GM12878 (cell line): ENCODE measurements at regions of chr17 and their contacts with region 1.

Region 1: GRCh38 chr17:62109378-62109902 is 44.4 kb upstream of the MED13 start:
- DNase-seq: peak; percentile 77
- ATAC-seq: peak; percentile 100
- H3K4me3 ChIP-seq: no peak overlapping the region
- H3K27ac ChIP-seq: no peak overlapping the region
- H3K4me1 ChIP-seq: peaks cover 2% of the 10 kb centered on the region; the same call in 1 of the 2 replicates
- H3K27me3 ChIP-seq: no peaks in the 10 kb centered on the region; a peak in 1 of 4 replicates
- CTCF ChIP-seq: peak; percentile 97 to 100 (median 100); a peak in 5 of 6 replicates
- EP300 ChIP-seq: no peak
- POLR2A ChIP-seq: no peak
- RAD21 ChIP-seq: peak; percentile 100

Region 2: GRCh38 chr17:61412143-61412859 is 697.1 kb before region 1 on chr17:
- CTCF ChIA-PET with region 1: interaction called, 4 read pairs
- POLR2A ChIA-PET with region 1: no interaction called
- RAD21 ChIA-PET with region 1: interaction called, 8 read pairs
- SMC1A ChIA-PET with region 1: interaction called, 8 read pairs
- in situ Hi-C with region 1: loop called (anchors 10 kb)
- intact Hi-C with region 1: loop called (anchors 5 kb)
- DNase-seq: peak; percentile 5
- ATAC-seq: peak; percentile 83
- H3K4me3 ChIP-seq: peak overlapping the region; percentile 54; the same call in 1 of the 2 replicates
- H3K27ac ChIP-seq: no peak overlapping the region
- H3K4me1 ChIP-seq: peaks cover 4% of the 10 kb centered on the region; the same call in 1 of the 2 replicates
- H3K27me3 ChIP-seq: peaks cover 17 to 34% of the 10 kb centered on the region in 2 experiments
- CTCF ChIP-seq: peak; percentile 83 to 94 (median 87)
- EP300 ChIP-seq: no peak
- POLR2A ChIP-seq: no peak
- RAD21 ChIP-seq: peak; percentile 89

Region 3: DNA sequence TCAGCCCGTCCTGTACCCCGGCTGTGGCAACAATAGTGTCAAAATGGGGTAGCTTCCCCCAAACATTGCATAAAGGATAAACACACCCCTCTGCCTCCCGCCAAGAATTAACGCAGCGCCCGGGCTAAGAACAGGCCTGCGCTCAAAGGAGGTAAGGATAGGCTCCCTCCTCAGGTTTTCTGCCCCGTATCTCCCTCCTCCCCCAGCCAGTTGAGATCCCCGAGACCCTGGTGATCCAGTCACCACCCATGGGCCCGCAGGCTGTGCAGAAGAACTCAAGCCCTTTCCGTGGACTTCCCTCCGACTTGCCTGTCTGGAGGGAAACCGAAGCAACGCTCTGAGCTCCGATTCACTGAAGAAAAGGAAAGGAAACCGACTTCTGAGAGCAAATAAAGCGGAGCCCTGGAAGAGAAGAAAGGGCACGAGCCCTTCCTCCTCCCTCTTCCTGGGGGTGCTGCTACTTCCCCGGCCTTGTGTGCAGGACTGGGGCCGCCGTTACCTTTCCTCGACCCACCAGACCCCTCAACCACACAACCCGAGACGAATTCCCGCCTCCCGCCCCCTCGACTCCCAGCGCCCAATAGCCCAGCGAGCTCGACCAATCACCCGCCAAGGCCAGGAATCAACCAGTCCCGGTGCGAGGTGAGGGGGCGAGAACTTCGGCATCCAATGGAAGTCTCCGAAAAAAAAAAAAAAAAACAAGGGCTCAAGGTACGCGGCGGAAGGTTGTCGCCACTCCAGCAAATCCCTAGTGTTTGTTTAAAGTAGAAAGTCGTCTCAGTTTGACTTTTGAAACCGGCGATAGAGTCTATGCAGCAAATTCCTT is 246.3 kb before region 1 on chr17 and contains the start of gene BRIP1:
- CTCF ChIA-PET with region 1: interaction called, 52 read pairs
- POLR2A ChIA-PET with region 1: no interaction called
- RAD21 ChIA-PET with region 1: interaction called, 31 read pairs
- SMC1A ChIA-PET with region 1: interaction called, 35 read pairs
- in situ Hi-C with region 1: no loop called
- intact Hi-C with region 1: loop called (anchors 5 kb)
- DNase-seq: peak; percentile 78
- ATAC-seq: peak; percentile 97
- H3K4me3 ChIP-seq: peak within 1 kb of the TSS; percentile 98
- H3K27ac ChIP-seq: peak within 1 kb of the TSS; percentile 97
- H3K4me1 ChIP-seq: peaks cover 3% of the 10 kb centered on the region; the same call in 1 of the 2 replicates
- H3K27me3 ChIP-seq: no peaks in the 10 kb centered on the region
- CTCF ChIP-seq: no peak
- EP300 ChIP-seq: no peak
- POLR2A ChIP-seq: peak; percentile 91
- RAD21 ChIP-seq: no peak
- polyA plus RNA-seq, gene BRIP1: 4.0 to 4.2 TPM

Region 4: DNA sequence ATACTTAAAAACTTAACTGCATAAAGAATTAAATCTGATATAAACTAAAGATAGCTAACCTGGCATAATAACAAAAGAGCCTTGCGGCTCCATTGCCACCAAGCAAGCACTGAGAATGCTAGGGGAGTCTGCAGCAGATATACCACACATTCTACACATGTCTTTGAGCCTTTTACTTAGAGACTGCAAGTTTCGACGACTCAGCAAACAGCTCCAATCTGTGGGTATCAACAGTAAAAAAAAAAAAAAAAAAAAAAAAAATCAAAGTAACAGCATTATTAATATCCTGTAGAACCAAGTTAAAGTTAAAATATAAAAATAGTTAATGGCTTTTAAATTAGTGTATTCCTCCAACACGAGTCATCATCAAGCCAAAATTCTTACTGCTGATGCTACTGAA is 153.8 kb before region 1 on chr17:
- CTCF ChIA-PET with region 1: interaction called, 5 read pairs
- POLR2A ChIA-PET with region 1: no interaction called
- RAD21 ChIA-PET with region 1: interaction called, 16 read pairs
- SMC1A ChIA-PET with region 1: interaction called, 18 read pairs
- in situ Hi-C with region 1: no loop called
- intact Hi-C with region 1: no loop called
- DNase-seq: no peak
- ATAC-seq: no peak
- H3K4me3 ChIP-seq: no peak overlapping the region
- H3K27ac ChIP-seq: no peak overlapping the region
- H3K4me1 ChIP-seq: no peaks in the 10 kb centered on the region
- H3K27me3 ChIP-seq: no peaks in the 10 kb centered on the region
- CTCF ChIP-seq: no peak
- EP300 ChIP-seq: no peak
- POLR2A ChIP-seq: no peak
- RAD21 ChIP-seq: no peak

Region 5: GRCh38 chr17:62024894-62025293 is 84.5 kb before region 1 on chr17:
- CTCF ChIA-PET with region 1: interaction called, 50 read pairs
- POLR2A ChIA-PET with region 1: no interaction called
- RAD21 ChIA-PET with region 1: interaction called, 22 read pairs
- SMC1A ChIA-PET with region 1: interaction called, 21 read pairs
- in situ Hi-C with region 1: no loop called
- intact Hi-C with region 1: no loop called
- DNase-seq: no peak
- ATAC-seq: no peak
- H3K4me3 ChIP-seq: no peak overlapping the region
- H3K27ac ChIP-seq: no peak overlapping the region
- H3K4me1 ChIP-seq: no peaks in the 10 kb centered on the region
- H3K27me3 ChIP-seq: no peaks in the 10 kb centered on the region
- CTCF ChIP-seq: no peak
- EP300 ChIP-seq: no peak
- POLR2A ChIP-seq: no peak
- RAD21 ChIP-seq: no peak

Region 6: DNA sequence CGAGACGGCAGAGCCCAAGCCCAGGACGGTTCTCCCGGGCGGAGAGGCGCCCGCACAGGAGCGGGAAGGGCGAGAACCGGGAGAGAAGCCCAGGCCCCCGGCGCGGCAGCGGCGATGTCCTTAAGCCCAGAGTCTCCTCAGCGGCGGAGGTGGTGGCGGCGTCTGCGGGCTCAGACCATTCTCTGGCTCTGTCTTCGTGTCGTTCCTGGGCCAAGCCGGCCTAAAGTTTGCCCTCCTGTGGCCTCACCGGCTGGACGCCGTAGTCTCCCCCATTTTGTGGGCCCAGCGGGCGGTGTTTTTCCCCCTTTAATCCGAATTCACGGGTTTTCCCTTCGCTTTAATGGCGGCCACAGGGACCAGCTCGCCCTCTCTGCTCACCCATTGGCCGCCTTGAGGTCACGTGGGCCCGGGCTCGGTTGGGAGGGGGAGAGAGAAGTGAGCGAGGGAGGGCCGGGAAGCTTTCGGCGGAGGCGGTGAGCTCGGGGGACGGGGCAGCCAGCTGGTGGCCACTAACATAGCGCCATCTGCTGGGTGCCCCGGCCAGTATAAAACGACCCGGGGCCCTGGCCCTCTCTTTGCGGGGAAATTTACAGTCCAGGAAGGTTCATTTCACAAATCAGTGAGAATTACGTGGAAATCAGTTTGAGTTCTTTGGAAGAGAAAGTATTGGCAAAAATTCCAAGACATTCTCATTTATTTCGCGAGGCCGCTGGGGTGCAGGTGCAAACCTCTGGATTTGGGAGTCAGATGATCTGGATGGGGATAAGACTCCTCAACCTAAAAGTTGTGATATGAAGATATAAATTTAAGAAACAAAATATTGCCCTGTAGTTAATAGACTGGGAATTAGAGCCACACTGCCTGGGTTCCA is 43.6 kb before region 1 on chr17:
- CTCF ChIA-PET with region 1: interaction called, 105 read pairs
- POLR2A ChIA-PET with region 1: no interaction called
- RAD21 ChIA-PET with region 1: interaction called, 169 read pairs
- SMC1A ChIA-PET with region 1: interaction called, 57 read pairs
- in situ Hi-C with region 1: no loop called
- intact Hi-C with region 1: loop called (anchors 2 kb)
- DNase-seq: peak; percentile 88
- ATAC-seq: peak; percentile 95
- H3K4me3 ChIP-seq: peak overlapping the region; percentile 79
- H3K27ac ChIP-seq: peak overlapping the region; percentile 92
- H3K4me1 ChIP-seq: peaks cover 6% of the 10 kb centered on the region
- H3K27me3 ChIP-seq: no peaks in the 10 kb centered on the region
- CTCF ChIP-seq: peak; percentile 85 to 91 (median 88); a peak in 5 of 6 replicates
- EP300 ChIP-seq: 0 out of 4 replicates have a peak, but pooled peaks of 1 of the 2 experiments have one; percentile 30
- POLR2A ChIP-seq: peak; percentile 87
- RAD21 ChIP-seq: peak; percentile 56

Region 7: DNA sequence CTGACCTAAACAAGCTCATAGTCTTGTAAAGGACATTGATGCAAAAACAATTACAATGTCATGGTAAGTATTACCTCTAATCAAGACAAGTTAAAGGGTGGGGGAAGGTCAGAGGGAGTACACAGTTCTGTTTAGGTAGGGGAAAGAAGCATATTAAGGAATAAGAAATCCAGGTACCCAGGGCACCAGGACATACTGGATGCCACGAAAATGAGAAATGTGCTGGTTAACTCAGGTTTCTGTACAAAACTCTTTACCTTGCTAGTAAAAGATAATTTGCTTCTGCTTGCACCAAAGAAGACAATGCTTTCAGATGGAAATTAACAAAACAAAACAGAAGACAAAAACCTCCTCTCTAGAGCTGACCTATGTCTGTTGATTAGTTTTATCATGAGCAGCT is 26.3 kb after region 1 on chr17:
- CTCF ChIA-PET with region 1: no interaction called
- POLR2A ChIA-PET with region 1: no interaction called
- RAD21 ChIA-PET with region 1: no interaction called
- SMC1A ChIA-PET with region 1: no interaction called
- in situ Hi-C with region 1: no loop called
- intact Hi-C with region 1: no loop called
- DNase-seq: no peak
- ATAC-seq: no peak
- H3K4me3 ChIP-seq: no peak overlapping the region
- H3K27ac ChIP-seq: no peak overlapping the region
- H3K4me1 ChIP-seq: no peaks in the 10 kb centered on the region
- H3K27me3 ChIP-seq: no peaks in the 10 kb centered on the region; a peak in 1 of 4 replicates
- CTCF ChIP-seq: no peak
- EP300 ChIP-seq: no peak
- POLR2A ChIP-seq: no peak
- RAD21 ChIP-seq: no peak